Aorta (tissue), 5 donors: ENCODE measurements at regions of chr6 and their contacts with region 1.

Region 1: GRCh38 chr6:76682842-76683241 is 610.4 kb upstream of the IMPG1 start:
- DNase-seq: no peak
- ATAC-seq: no peak
- H3K4me3 ChIP-seq: no peak overlapping the region
- H3K27ac ChIP-seq: no peak overlapping the region
- H3K4me1 ChIP-seq: no peaks in the 10 kb centered on the region
- H3K27me3 ChIP-seq: no peaks in the 10 kb centered on the region

Region 2: DNA sequence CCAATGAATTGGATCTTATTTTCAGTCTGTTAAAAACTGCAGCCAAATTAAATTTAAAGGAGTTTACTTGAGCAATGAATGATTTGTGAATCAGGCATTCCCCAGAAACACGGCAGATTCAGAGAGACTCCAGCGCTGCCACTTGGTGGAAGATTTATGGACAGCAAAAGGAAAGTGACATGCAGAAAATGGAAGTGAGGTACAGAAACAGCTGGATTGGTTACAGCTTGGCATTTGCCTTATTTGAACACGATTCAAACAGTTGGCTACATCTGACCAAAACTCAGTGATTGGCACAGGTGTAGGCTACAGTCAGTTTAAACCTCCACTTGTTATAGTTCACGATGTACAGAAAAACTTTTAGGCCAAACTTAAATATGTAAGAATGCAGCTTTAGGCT is 352.8 kb before region 1 on chr6:
- intact Hi-C with region 1: no loop called
- DNase-seq: no peak
- ATAC-seq: no peak
- H3K4me3 ChIP-seq: no peak overlapping the region
- H3K27ac ChIP-seq: no peak overlapping the region
- H3K4me1 ChIP-seq: no peaks in the 10 kb centered on the region
- H3K27me3 ChIP-seq: no peaks in the 10 kb centered on the region

Region 3: GRCh38 chr6:76877238-76877553 is 194.4 kb after region 1 on chr6:
- intact Hi-C with region 1: loop called in 1 of 2 experiments (anchors 10 kb)
- DNase-seq: no peak
- ATAC-seq: no peak
- H3K4me3 ChIP-seq: no peak overlapping the region
- H3K27ac ChIP-seq: no peak overlapping the region
- H3K4me1 ChIP-seq: no peaks in the 10 kb centered on the region
- H3K27me3 ChIP-seq: no peaks in the 10 kb centered on the region